ENCODE measurements at regions of chr17 and their contacts with region 1.

Region 1: DNA sequence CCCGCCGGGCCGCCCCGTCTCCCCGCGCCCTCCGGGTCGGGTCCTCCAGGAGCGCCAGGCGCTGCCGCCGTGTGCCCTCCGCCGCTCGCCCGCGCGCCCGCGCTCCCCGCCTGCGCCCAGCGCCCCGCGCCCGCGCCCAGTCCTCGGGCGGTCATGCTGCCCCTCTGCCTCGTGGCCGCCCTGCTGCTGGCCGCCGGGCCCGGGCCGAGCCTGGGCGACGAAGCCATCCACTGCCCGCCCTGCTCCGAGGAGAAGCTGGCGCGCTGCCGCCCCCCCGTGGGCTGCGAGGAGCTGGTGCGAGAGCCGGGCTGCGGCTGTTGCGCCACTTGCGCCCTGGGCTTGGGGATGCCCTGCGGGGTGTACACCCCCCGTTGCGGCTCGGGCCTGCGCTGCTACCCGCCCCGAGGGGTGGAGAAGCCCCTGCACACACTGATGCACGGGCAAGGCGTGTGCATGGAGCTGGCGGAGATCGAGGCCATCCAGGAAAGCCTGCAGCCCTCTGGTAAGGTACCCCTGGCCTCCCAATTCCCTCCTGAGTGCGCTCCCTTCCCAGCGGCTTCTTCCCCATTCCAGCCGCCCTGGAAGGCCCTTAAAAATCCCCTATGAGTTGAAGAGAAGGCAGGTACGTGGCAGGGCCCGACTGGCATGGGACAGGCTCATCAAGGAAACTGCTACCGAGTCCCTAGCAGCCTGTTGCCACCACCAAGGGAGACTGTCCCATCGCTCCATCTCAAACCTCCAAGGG is 505 bp downstream of the IGFBP4 start:
- DNase-seq: peak; percentile 92
- ATAC-seq: peak; percentile 51

Region 2: GRCh38 chr17:40490289-40490853 is 46.6 kb after region 1 on chr17:
- intact Hi-C with region 1: no loop called
- DNase-seq: peak; percentile 60
- ATAC-seq: peak; percentile 50

Region 3: DNA sequence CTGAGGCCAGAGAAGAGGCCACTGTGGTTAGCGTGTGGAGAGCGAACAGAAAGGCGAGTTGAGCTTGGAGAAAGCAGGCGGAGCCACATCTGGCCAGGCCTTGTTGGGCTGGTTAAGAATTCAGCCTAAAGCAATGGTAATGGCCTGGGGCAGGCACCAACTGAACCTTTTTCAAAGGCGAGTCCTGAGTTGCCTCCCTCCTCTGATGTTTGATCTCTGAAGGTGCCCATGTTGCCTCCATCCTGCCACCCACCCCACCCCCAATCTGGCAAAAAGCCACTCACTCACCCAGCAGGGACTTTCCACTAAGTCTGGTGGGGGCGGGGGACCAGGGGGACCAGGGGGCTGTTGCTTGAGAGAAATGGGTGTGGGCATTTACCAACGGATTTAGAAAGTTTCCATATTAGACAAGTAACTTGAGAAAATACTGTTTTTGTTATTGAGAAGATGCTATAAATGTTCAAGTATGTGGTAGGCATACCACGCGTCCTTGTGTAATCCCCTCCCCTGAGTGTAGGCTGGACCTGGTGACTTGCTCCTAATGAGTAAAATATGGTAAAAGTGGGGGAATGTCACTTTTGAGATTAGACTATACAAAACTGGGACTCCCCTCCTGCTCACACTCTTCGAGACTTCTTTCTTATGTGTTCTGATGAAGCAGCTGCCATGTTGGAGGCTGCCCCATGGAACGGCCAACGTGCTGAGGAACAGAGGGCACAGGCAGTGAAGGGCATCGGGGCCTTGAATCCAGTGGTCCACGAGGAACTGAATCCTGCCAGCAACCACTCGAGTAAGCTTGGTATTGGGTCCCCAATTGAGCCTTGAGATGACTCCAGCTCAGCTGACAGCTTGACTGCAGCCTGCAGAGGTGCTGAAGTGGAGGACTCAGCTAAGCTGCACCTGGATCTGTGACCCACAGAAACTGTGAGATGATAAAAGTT is 87.6 kb after region 1 on chr17:
- intact Hi-C with region 1: loop called (anchors 5 kb)
- DNase-seq: no peak
- ATAC-seq: no peak